ENCODE measurements at regions of chr1 and their contacts with region 1.

Region 1: DNA sequence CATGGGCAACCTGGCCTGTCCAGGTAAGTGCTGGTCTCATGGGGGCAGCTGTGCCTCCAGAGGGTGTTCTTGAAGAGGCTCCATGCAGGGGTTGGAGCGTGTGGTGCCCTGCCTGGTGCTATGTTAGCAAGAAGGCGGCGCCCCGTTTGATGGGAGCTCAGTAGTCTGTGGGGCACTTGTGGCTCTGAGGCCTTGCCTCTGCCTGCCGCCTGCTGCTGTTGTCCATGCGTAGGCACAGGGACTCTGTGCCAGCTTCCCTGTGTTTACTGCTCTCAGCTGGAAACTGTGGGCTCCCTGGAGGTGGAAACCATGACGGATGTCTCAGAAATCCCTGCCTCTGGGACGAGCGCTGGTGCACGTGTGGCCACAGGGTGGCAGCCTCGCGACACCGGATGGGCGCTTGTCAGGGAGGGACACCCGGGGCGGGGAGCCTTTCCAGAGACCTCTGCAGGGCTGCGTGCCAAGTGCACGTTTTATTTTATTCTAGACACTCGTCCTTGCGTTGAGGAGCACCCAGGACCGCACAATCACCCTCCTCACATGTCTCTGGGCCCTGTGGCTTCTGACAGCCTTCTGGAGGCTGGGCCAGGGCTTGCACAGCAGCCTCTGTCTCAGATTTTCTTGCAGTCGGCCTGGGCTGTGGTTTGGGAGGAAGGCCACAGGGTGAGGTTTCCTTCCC is 27.1 kb downstream of the SNAP47 start:
- DNase-seq: peak; percentile 94
- H3K4me3 ChIP-seq: peak overlapping the region in 1 of 4 donors; percentile 19
- H3K27ac ChIP-seq: peak overlapping the region; percentile 10 to 86 (median 72)
- H3K4me1 ChIP-seq: peaks cover 46 to 68% (median 57%) of the 10 kb centered on the region in 4 donors
- H3K27me3 ChIP-seq: no peaks in the 10 kb centered on the region
- CTCF ChIP-seq: peak; percentile 87 to 93 (median 89)
- EP300 ChIP-seq: no peak
- POLR2A ChIP-seq: no peak

Region 2: GRCh38 chr1:227666286-227666685 is 96.1 kb before region 1 on chr1:
- intact Hi-C with region 1: no loop called
- DNase-seq: no peak
- H3K4me3 ChIP-seq: no peak overlapping the region
- H3K27ac ChIP-seq: no peak overlapping the region
- H3K4me1 ChIP-seq: no peaks in the 10 kb centered on the region
- H3K27me3 ChIP-seq: no peaks in the 10 kb centered on the region
- CTCF ChIP-seq: no peak
- EP300 ChIP-seq: no peak
- POLR2A ChIP-seq: no peak

Region 3: DNA sequence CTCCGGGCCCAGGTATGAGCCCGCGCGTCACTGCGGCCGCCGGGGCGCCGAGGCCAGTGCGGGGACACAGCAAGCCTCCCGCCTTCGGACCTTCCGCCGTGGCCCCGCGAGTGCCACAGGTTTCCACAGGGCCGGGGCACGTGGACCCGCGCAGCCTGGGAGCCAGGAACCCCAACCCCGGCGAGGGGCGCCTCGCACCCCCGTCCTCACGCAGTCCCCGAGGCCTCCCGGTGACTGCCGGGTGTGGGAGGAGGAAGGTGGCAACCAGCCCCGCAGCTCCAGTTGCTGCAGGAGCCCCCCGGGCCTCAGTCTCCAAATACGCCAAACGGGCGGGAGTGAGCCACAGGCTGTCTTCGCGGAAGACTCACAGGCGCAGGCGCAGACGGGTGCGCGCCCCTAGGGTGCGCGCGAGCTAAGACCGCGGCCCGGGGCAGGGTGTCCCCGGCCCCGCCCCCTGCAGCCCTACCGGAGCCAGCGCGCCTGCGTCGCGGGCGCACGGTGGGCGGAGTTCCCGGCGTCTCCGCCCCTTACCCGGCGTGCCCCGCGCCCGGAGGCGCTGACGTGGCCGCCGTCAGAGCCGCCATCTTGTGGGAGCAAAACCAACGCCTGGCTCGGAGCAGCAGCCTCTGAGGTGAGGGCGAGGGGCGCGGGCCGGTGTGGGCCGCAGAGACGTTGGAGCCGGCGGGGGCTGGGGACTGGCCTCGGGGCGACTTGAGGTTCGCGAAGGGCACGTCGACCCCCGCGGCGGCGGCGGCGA is 319.9 kb after region 1 on chr1 and contains the start of gene ARF1:
- intact Hi-C with region 1: loop called (anchors 10 kb)
- DNase-seq: peak; percentile 95
- H3K4me3 ChIP-seq: peak within 1 kb of the TSS; percentile 79 to 99 (median 96)
- H3K27ac ChIP-seq: peak within 1 kb of the TSS; percentile 96 to 100 (median 100)
- H3K4me1 ChIP-seq: peaks cover 43 to 62% (median 53%) of the 10 kb centered on the region in 4 donors
- H3K27me3 ChIP-seq: no peaks in the 10 kb centered on the region
- CTCF ChIP-seq: peak; percentile 14 to 43 (median 24)
- EP300 ChIP-seq: no peak
- POLR2A ChIP-seq: peak; percentile 84
- total RNA-seq, gene ARF1: 238 to 392 (median 346) TPM

Measured in esophagus muscularis mucosa (tissue), 4 donors.